Right cardiac atrium (tissue), 5 donors: ENCODE measurements at regions of chr21 and their contacts with region 1.

Region 1: DNA sequence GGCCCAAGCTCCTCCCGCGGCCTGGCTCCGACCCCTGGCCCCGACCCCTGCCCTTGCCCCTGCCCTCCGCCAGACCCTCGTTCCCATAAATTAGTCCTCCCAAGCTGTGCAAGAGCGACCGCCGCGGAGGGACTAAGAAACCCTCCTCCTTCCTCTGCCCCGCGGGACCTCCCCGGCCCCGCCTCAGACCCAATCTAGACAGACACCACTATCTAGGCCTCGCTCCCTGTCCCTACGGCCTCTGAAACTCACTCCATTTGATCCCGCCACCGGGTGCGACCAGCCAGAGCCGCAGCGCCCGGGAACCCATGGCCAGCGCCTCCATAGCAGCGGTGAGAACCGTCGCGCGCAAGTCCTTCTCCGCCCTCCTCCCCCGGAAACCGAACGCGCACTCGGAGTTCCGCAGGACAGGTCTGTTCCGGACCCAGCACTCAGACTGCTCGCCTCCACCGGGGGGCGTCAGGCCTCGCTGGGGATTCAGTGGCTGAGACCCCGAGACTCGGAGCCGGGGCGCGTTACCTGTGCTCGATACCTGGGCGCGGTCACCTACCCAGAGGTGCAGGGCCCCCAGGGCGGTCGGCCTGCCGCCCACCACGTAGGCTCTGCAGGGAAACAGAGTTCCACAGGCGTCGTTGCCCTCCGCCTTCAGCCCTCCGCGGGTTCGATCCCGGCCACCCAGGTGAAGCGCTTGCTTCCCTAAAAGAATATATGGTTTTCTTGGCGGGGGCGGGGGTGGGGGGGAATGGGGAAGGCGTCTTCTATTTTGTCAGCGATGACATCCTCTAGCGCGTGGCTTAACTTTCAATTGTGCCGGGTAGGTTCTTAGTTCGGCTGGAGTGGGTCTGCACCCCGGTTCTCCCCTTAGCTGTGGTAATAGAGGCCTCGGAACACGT is at the start of gene MRPL39:
- DNase-seq: peak; percentile 89 to 95 (median 94)
- ATAC-seq: peak; percentile 98
- H3K4me3 ChIP-seq: peak within 1 kb of the TSS; percentile 65
- H3K27ac ChIP-seq: peak within 1 kb of the TSS; percentile 76
- H3K4me1 ChIP-seq: no peaks in the 10 kb centered on the region
- H3K27me3 ChIP-seq: no peaks in the 10 kb centered on the region
- total RNA-seq, gene MRPL39: 30.6 to 38.3 (median 34.5) TPM

Region 2: DNA sequence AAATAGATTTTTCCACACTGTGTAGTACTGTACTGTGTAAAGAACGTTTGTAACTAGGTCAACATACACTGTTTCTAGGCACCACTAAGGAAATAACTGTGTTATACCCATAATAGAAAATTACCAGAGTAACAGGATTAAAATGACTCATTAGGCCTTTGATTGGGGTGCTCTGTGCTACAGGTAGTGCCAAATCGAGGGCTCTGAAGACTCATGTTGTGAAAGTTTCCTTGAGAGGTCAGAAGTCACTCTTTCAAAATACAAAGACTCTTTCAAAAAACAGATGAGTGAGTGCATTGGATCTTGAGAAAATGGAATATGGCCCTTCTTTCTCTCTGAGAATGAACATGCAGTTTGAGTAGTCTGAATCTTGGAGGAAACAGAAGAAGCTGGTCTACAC is 143.1 kb before region 1 on chr21:
- intact Hi-C with region 1: no loop called
- DNase-seq: no peak
- ATAC-seq: peak in 1 of 2 donors; percentile 64
- H3K4me3 ChIP-seq: no peak overlapping the region
- H3K27ac ChIP-seq: no peak overlapping the region
- H3K4me1 ChIP-seq: no peaks in the 10 kb centered on the region
- H3K27me3 ChIP-seq: no peaks in the 10 kb centered on the region

Region 3: GRCh38 chr21:25708467-25709065 is 101.2 kb after region 1 on chr21:
- intact Hi-C with region 1: loop called (anchors 2 to 5 kb)
- DNase-seq: no peak
- ATAC-seq: no peak
- H3K4me3 ChIP-seq: no peak overlapping the region
- H3K27ac ChIP-seq: no peak overlapping the region
- H3K4me1 ChIP-seq: no peaks in the 10 kb centered on the region
- H3K27me3 ChIP-seq: no peaks in the 10 kb centered on the region

Region 4: DNA sequence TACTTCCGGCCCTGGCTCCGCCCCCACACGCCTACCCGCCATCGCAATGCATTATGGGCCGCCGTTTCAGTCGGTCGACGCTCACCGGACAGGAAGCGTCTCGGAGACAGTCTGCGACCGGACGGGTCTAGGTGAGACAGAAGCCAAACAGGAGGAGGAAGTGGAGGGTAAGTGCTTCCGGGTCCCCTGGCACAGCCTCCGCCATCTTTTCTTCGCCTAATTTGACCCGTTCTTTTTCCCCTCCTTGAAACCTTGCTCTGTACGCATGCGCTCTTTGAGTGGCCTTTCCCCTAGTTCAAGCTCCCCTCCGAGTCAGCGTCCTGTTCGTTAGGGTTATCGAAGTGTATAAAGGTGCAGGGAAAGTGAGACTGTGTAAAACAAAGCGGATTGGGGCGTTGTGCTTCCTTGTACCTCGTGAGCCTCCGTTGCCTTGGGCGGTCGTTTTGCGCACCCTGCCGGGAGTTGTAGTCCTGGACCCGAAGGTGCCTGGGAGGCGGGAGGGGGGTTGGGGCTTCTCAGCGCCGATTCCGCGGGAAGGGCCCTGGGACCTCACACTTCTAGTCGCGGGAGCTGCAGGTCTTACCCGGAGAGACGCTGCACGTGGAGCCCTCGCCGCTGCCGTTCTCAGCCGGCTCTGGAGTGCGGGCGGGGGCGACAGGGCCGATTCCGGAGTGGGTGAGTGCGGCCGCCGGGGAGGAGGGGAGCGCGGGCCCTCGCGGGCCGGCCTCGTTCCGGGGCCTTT is 127.7 kb after region 1 on chr21 and contains the starts of genes ATP5PF and GABPA:
- intact Hi-C with region 1: loop called in 1 of 4 experiments (anchors 10 kb)
- DNase-seq: peak; percentile 97 to 98 (median 98)
- ATAC-seq: peak; percentile 97
- H3K4me3 ChIP-seq: peak within 1 kb of the TSS; percentile 65
- H3K27ac ChIP-seq: peak within 1 kb of the TSS; percentile 92
- H3K4me1 ChIP-seq: no peaks in the 10 kb centered on the region
- H3K27me3 ChIP-seq: no peaks in the 10 kb centered on the region
- total RNA-seq, gene ATP5PF: 554 to 718 (median 650) TPM
- total RNA-seq, gene GABPA: 17.7 to 22.3 (median 20.5) TPM